ENCODE measurements at regions of chr4 and their contacts with region 1.

Region 1: GRCh38 chr4:102180046-102180445 is 165.2 kb downstream of the SLC39A8 start:
- H3K4me3 ChIP-seq: no peak overlapping the region
- H3K27ac ChIP-seq: no peak overlapping the region
- H3K4me1 ChIP-seq: no peaks in the 10 kb centered on the region
- CTCF ChIP-seq: no peak

Region 2: DNA sequence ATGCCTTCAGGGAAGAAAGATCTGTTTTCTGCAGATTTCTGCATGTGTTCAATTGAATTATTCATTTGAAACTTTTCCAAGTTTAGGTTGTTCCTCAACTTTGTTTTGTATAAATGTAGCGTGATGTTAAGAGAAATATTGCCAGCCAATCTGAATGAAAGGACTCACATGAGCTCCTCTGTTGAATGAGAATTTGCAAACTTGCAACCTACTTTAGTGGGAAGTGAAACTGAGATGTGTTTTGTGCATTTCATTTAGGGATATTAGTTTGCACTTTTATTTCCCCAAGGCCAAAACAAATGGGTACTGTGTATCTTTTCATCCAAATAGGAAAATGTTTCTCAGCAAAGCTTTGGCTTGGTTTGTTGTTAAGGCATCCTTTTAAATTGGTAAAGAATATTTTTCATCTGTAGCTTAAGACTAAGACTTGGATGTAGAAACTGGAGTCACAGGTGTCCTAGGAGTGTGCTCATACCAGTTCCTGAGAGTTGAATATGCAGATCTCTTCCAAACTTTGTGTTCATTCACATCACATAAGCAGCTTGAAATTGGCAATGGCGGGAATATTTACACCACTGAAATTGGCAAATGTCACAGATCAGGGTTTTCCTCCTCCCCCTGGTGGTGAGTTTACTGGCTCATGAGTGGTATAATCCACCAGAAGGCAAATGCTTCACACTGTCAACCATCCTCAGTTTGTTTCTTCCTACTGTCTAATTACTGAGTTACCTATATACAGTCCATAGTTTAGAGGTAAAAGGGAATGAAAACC is 583.1 kb before region 1 on chr4:
- CTCF ChIA-PET with region 1: interaction called, 10 read pairs
- POLR2A ChIA-PET with region 1: no interaction called
- H3K4me3 ChIP-seq: no peak overlapping the region
- H3K27ac ChIP-seq: no peak overlapping the region
- H3K4me1 ChIP-seq: no peaks in the 10 kb centered on the region
- CTCF ChIP-seq: no peak

Region 3: GRCh38 chr4:101944649-101945048 is 235.4 kb before region 1 on chr4:
- CTCF ChIA-PET with region 1: no interaction called
- POLR2A ChIA-PET with region 1: no interaction called
- H3K4me3 ChIP-seq: no peak overlapping the region
- H3K27ac ChIP-seq: no peak overlapping the region
- H3K4me1 ChIP-seq: no peaks in the 10 kb centered on the region
- CTCF ChIP-seq: no peak

Measured in HEK293 (cell line).